ENCODE measurements at regions of chr19 and their contacts with region 1.

Region 1: GRCh38 chr19:7919610-7920518 is at the start of gene SNAPC2:
- DNase-seq: peak; percentile 92 to 100 (median 97)
- ATAC-seq: peak; percentile 70 to 73
- H3K4me3 Mint-ChIP-seq: peak within 1 kb of the TSS; percentile 84 to 95 (median 92)
- H3K27ac Mint-ChIP-seq: peak within 1 kb of the TSS; percentile 41 to 97 (median 92)
- H3K4me1 Mint-ChIP-seq: peaks cover 19 to 50% (median 47%) of the 10 kb centered on the region in 4 donors
- H3K27me3 Mint-ChIP-seq: peaks cover 11 to 33% (median 18%) of the 10 kb centered on the region in 5 donors
- polyA plus RNA-seq, gene SNAPC2: 11.4 to 19.9 (median 12.8) TPM

Region 2: DNA sequence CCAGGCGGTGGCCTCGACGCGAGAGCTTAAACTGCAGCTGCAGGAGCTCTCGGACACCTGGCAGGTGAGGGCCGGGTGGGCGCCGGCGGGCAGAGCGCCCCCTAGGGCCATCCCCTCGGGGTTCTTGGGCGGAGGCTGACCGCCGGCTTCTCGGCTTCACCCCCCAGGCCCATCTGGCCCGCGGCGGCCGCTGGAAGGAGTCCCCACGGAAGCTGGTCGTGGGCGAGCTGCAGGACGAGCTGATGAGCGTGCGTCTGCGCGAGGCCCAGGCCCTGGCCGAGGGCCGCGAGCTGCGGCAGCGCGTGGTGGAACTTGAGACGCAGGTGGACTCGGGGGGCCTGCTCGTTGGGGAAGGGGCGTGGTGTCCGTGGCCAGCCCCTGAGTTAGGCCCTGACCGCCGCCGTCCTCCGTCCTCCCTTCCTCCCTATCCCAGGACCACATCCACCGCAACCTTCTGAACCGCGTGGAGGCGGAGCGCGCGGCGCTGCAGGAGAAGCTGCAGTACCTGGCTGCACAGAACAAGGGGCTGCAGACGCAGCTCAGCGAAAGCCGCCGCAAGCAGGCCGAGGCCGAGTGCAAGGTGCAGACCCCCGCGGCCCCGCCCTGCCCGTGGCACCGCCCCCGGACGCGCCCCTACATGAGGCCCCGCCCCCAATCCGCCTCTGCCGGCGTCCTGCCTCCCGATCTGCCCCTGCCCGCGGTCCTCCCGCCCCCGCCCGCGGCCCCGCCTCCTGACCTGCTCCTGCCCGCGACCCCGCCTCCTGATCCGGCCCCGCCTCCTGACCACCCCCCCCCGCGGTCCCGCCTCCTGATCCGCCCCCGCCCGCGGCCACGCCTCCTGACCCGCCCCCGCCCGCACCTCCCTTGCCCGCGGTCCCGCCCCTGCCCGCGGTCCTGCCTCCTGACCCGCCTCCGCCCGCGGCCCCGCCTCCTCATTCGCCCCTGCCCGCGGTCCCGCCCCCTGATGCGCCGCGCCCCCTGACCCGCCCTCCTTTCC is 57.6 kb before region 1 on chr19:
- POLR2A ChIA-PET with region 1: interaction called, 13 read pairs
- DNase-seq: peak; percentile 51 to 87 (median 70)
- ATAC-seq: peak; percentile 71 to 72
- H3K4me3 Mint-ChIP-seq: peak overlapping the region; percentile 50 to 76 (median 64)
- H3K27ac Mint-ChIP-seq: no peak overlapping the region
- H3K4me1 Mint-ChIP-seq: peaks cover 8 to 22% (median 18%) of the 10 kb centered on the region in 4 donors
- H3K27me3 Mint-ChIP-seq: peaks cover 0 to 15% (median 0%) of the 10 kb centered on the region in 5 donors

Region 3: GRCh38 chr19:7868676-7869452 is 51.0 kb before region 1 on chr19:
- POLR2A ChIA-PET with region 1: interaction called, 29 read pairs
- DNase-seq: peak in 9 of 10 donors; percentile 76 to 94 (median 89)
- ATAC-seq: peak; percentile 77 to 79
- H3K4me3 Mint-ChIP-seq: peak overlapping the region; percentile 73 to 91 (median 83)
- H3K27ac Mint-ChIP-seq: peak overlapping the region in 9 of 10 donors; percentile 48 to 93 (median 85)
- H3K4me1 Mint-ChIP-seq: peaks cover 30 to 60% (median 46%) of the 10 kb centered on the region in 4 donors
- H3K27me3 Mint-ChIP-seq: peaks cover 0 to 26% (median 13%) of the 10 kb centered on the region in 5 donors

Region 4: GRCh38 chr19:7903244-7904073 is 16.4 kb before region 1 on chr19 and contains the start of gene MAP2K7:
- POLR2A ChIA-PET with region 1: interaction called, 69 read pairs
- DNase-seq: peak; percentile 100
- ATAC-seq: peak; percentile 83 to 85
- H3K4me3 Mint-ChIP-seq: peak within 1 kb of the TSS; percentile 84 to 95 (median 90)
- H3K27ac Mint-ChIP-seq: peak within 1 kb of the TSS; percentile 91 to 99 (median 96)
- H3K4me1 Mint-ChIP-seq: peaks cover 16 to 46% (median 42%) of the 10 kb centered on the region in 4 donors
- H3K27me3 Mint-ChIP-seq: peaks cover 0 to 6% (median 0%) of the 10 kb centered on the region in 5 donors
- polyA plus RNA-seq, gene MAP2K7: 1.8 to 5.1 (median 2.3) TPM

Region 5: DNA sequence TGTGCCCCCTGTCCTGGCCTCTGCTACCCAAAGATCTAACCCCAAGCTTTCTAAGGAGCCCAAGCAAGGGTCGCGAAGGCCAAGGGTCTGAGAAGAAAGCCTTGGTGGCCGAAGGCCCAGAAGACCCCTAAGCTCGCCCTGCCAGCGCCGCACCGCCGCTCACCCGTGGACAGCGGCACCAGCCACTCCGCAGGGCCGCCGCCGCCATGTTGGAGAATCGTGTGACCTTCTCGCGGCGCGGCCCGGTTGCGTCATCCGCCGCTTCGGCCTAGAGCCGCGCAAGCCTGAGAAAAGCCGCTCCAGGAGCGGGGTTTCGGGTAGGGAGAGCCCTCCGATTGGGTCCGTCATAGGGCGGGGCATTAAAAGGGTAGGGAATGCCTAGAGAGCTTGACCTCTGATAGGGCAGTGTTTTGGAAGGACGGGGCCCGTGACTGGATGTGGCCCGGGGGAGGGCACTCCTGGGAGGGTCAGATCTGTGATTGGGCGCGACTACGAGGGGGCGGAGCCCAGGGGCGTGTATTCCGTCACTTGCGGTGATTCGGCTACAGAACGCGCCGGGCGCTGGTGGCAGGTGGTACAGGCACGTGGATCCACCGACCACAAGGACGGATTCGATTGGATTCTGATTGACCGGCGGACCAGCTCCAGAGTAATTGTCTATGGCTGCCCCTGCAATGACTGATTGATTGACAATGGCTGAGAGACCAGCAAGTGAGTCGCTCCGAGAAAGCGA is 23.7 kb after region 1 on chr19 and contains the start of gene TIMM44:
- POLR2A ChIA-PET with region 1: interaction called, 66 read pairs
- DNase-seq: peak; percentile 93 to 99 (median 98)
- ATAC-seq: peak; percentile 96
- H3K4me3 Mint-ChIP-seq: peak within 1 kb of the TSS; percentile 88 to 98 (median 95)
- H3K27ac Mint-ChIP-seq: peak within 1 kb of the TSS; percentile 90 to 98 (median 96)
- H3K4me1 Mint-ChIP-seq: peaks cover 18 to 43% (median 32%) of the 10 kb centered on the region in 4 donors
- H3K27me3 Mint-ChIP-seq: no peaks in the 10 kb centered on the region
- polyA plus RNA-seq, gene TIMM44: 9.9 to 19.7 (median 15.3) TPM

Region 6: GRCh38 chr19:8095903-8096470 is 176.1 kb after region 1 on chr19:
- POLR2A ChIA-PET with region 1: no interaction called
- DNase-seq: peak in 1 of 10 donors; percentile 9
- ATAC-seq: no peak
- H3K4me3 Mint-ChIP-seq: no peak overlapping the region
- H3K27ac Mint-ChIP-seq: peak overlapping the region in 1 of 10 donors; percentile 29
- H3K4me1 Mint-ChIP-seq: no peaks in the 10 kb centered on the region
- H3K27me3 Mint-ChIP-seq: peaks cover 0 to 5% (median 3%) of the 10 kb centered on the region in 5 donors